Colonic mucosa (tissue), 4 donors: ENCODE measurements at regions of chr3 and their contacts with region 1.

Region 1: DNA sequence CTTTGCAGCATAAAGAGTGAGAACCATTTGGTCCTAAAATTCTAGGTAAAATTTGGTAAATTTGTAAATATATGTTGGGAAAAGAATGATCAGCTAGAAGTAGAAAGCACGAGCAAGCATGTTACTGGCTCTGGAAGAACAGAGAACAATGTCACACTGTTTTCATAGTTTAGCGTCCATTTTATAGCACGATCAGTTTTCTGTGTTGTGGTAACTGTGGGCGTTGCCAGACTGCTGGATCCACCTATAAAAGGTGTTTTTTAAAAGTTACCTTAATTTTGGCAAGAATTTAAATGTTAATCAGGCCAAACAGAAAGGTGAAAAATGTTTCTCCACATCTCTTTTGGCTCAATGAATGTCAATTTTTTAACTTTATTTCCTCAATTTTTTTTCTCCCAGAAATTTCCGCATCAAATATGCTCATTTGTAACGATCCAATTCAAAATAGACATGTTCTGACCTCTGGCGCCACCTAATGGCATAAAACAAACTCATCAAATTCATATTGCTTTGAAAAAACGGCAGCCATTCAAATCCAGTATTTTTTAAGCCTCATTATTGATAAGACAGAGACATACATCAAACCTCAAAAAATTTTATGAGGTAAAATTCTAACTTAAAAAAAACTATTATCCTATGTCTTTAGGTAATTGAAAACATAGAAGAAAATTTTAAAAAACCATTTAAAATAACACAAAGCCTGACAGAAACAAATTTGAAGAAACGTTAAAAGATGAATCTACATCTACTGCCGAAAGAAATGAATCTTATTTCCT is 5.5 kb upstream of the GP5 start:
- DNase-seq: peak; percentile 72
- H3K4me3 ChIP-seq: no peak overlapping the region
- H3K27ac ChIP-seq: no peak overlapping the region
- H3K4me1 ChIP-seq: no peaks in the 10 kb centered on the region
- H3K27me3 ChIP-seq: no peaks in the 10 kb centered on the region
- CTCF ChIP-seq: peak; percentile 56

Region 2: GRCh38 chr3:193997228-193998122 is 407.1 kb before region 1 on chr3:
- intact Hi-C with region 1: no loop called
- DNase-seq: peak; percentile 33
- H3K4me3 ChIP-seq: no peak overlapping the region
- H3K27ac ChIP-seq: no peak overlapping the region
- H3K4me1 ChIP-seq: no peaks in the 10 kb centered on the region
- H3K27me3 ChIP-seq: no peaks in the 10 kb centered on the region
- CTCF ChIP-seq: no peak

Region 3: GRCh38 chr3:194285024-194285849 is 119.3 kb before region 1 on chr3:
- intact Hi-C with region 1: no loop called
- DNase-seq: no peak
- H3K4me3 ChIP-seq: no peak overlapping the region
- H3K27ac ChIP-seq: no peak overlapping the region
- H3K4me1 ChIP-seq: no peaks in the 10 kb centered on the region
- H3K27me3 ChIP-seq: no peaks in the 10 kb centered on the region
- CTCF ChIP-seq: no peak

Region 4: DNA sequence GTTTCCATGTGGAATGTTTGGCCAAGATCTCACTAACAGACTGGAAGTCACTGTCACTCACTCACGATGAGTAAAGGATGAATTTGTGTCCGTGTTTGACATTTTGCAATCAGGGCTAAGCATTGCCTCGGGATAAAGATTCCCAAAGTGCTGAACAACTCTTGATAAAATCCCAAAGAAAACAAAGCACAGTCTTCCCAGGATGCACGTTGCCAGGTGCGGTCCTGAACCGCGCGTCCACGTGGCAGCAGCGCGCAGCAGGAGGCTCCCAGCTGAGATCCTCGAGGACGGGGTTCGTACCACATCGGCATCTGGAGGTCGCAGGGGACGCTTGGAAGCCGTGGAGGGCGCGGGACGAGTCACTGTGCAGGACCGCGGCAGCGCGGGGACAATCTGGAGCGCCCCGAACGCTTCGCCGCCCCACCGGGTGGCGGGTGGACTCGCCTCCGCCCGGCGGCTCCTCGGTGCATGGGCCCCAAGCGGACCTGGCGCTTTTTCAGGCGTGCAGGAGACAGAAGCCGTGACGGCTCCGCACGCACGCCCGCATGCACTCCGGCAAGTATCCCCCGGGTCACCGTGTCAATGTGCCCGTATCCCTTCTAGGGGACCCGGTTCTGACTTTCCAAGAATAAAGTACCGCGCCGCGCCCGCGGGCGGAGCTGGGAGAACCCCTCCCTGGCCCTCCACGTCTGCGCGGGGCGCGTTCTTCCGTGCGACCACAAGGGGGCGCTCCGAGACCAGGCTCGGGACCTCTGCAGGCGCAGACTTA is 71.2 kb before region 1 on chr3:
- intact Hi-C with region 1: loop called (anchors 2 kb)
- DNase-seq: peak; percentile 93
- H3K4me3 ChIP-seq: peak overlapping the region; percentile 38
- H3K27ac ChIP-seq: no peak overlapping the region
- H3K4me1 ChIP-seq: no peaks in the 10 kb centered on the region
- H3K27me3 ChIP-seq: peaks cover 6% of the 10 kb centered on the region
- CTCF ChIP-seq: peak; percentile 98

Region 5: DNA sequence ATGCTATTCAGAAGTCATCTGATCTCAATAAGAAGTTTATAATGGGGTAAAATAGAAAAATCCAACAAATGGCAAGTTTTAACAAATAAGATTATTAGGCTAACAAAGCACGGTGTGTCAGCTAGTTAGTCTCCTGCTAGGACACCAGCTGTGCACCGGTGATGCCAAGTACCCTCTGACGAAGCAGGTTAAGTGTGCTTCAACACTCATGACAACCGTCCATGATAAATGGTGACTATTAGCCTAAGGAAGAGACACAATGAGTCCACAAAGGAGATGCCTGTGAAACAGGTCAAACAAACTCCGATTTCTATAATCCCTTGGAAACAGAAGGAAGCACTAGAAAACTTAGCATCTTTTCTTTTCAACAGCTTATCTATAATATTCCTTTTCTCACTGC is 45.8 kb after region 1 on chr3:
- intact Hi-C with region 1: no loop called
- DNase-seq: no peak
- H3K4me3 ChIP-seq: no peak overlapping the region
- H3K27ac ChIP-seq: no peak overlapping the region
- H3K4me1 ChIP-seq: no peaks in the 10 kb centered on the region
- H3K27me3 ChIP-seq: no peaks in the 10 kb centered on the region
- CTCF ChIP-seq: no peak